ENCODE measurements at regions of chr13 and their contacts with region 1.

Region 1: GRCh38 chr13:30355384-30355699 is 48.0 kb upstream of the KATNAL1 start:
- DNase-seq: peak in 3 of 9 donors; percentile 26 to 40 (median 28)
- ATAC-seq: peak; percentile 84
- H3K4me3 ChIP-seq: no peak overlapping the region
- H3K4me3 Mint-ChIP-seq: peak overlapping the region in 7 of 10 donors; percentile 14 to 61 (median 32)
- H3K27ac ChIP-seq: no peak overlapping the region
- H3K27ac Mint-ChIP-seq: peak overlapping the region in 3 of 9 donors; percentile 8 to 75 (median 39)
- H3K4me1 ChIP-seq: peaks cover 0 to 4% of the 10 kb centered on the region in 2 donors
- H3K4me1 Mint-ChIP-seq: peaks cover 10 to 40% (median 35%) of the 10 kb centered on the region in 7 donors
- H3K27me3 ChIP-seq: no peaks in the 10 kb centered on the region
- H3K27me3 Mint-ChIP-seq: no peaks in the 10 kb centered on the region

Region 2: GRCh38 chr13:30186634-30187415 is 168.5 kb before region 1 on chr13:
- CTCF ChIA-PET with region 1: interaction called, 10 read pairs
- POLR2A ChIA-PET with region 1: no interaction called
- intact Hi-C with region 1: no loop called
- DNase-seq: no peak
- ATAC-seq: no peak
- H3K4me3 ChIP-seq: no peak overlapping the region
- H3K4me3 Mint-ChIP-seq: no peak overlapping the region
- H3K27ac ChIP-seq: no peak overlapping the region
- H3K27ac Mint-ChIP-seq: peak overlapping the region in 1 of 9 donors; percentile 6
- H3K4me1 ChIP-seq: no peaks in the 10 kb centered on the region
- H3K4me1 Mint-ChIP-seq: peaks cover 0 to 15% (median 10%) of the 10 kb centered on the region in 7 donors
- H3K27me3 ChIP-seq: no peaks in the 10 kb centered on the region
- H3K27me3 Mint-ChIP-seq: no peaks in the 10 kb centered on the region